ENCODE measurements at regions of chr1 and their contacts with region 1.

Region 1: GRCh38 chr1:117605774-117606648 is at the start of gene TENT5C:
- DNase-seq: peak; percentile 99
- ATAC-seq: peak; percentile 88
- H3K4me3 Mint-ChIP-seq: peak within 1 kb of the TSS; percentile 99
- H3K27ac Mint-ChIP-seq: peak within 1 kb of the TSS; percentile 99
- H3K4me1 Mint-ChIP-seq: peaks cover 50% of the 10 kb centered on the region
- H3K27me3 Mint-ChIP-seq: no peaks in the 10 kb centered on the region
- CTCF ChIP-seq: no peak
- total RNA-seq, gene TENT5C: 56.2 and 59.3 TPM in 2 replicates

Region 2: GRCh38 chr1:116372587-116373444 is 1233.2 kb before region 1 on chr1 and contains the start of gene ATP1A1:
- CTCF ChIA-PET with region 1: no interaction called
- POLR2A ChIA-PET with region 1: interaction called, 3 read pairs
- intact Hi-C with region 1: loop called (anchors 10 kb)
- DNase-seq: peak; percentile 99
- ATAC-seq: peak; percentile 75
- H3K4me3 Mint-ChIP-seq: peak within 1 kb of the TSS; percentile 91
- H3K27ac Mint-ChIP-seq: peak within 1 kb of the TSS; percentile 94
- H3K4me1 Mint-ChIP-seq: peaks cover 38% of the 10 kb centered on the region
- H3K27me3 Mint-ChIP-seq: peaks cover 2% of the 10 kb centered on the region
- CTCF ChIP-seq: no peak
- total RNA-seq, gene ATP1A1: 139 and 151 TPM in 2 replicates

Region 3: GRCh38 chr1:117367047-117368018 is 238.7 kb before region 1 on chr1 and contains the start of gene MAN1A2:
- CTCF ChIA-PET with region 1: no interaction called
- POLR2A ChIA-PET with region 1: interaction called, 4 read pairs
- intact Hi-C with region 1: loop called (anchors 1 kb)
- DNase-seq: peak; percentile 82
- ATAC-seq: peak; percentile 72
- H3K4me3 Mint-ChIP-seq: peak within 1 kb of the TSS; percentile 95
- H3K27ac Mint-ChIP-seq: peak within 1 kb of the TSS; percentile 91
- H3K4me1 Mint-ChIP-seq: peaks cover 68% of the 10 kb centered on the region
- H3K27me3 Mint-ChIP-seq: no peaks in the 10 kb centered on the region
- CTCF ChIP-seq: no peak
- total RNA-seq, gene MAN1A2: 43.3 and 46.0 TPM in 2 replicates

Region 4: GRCh38 chr1:117632269-117633067 is 26.5 kb after region 1 on chr1:
- CTCF ChIA-PET with region 1: no interaction called
- POLR2A ChIA-PET with region 1: interaction called, 248 read pairs
- intact Hi-C with region 1: no loop called
- DNase-seq: no peak
- ATAC-seq: no peak
- H3K4me3 Mint-ChIP-seq: peak overlapping the region; percentile 15
- H3K27ac Mint-ChIP-seq: no peak overlapping the region
- H3K4me1 Mint-ChIP-seq: peaks cover 95% of the 10 kb centered on the region
- H3K27me3 Mint-ChIP-seq: no peaks in the 10 kb centered on the region
- CTCF ChIP-seq: no peak

Region 5: DNA sequence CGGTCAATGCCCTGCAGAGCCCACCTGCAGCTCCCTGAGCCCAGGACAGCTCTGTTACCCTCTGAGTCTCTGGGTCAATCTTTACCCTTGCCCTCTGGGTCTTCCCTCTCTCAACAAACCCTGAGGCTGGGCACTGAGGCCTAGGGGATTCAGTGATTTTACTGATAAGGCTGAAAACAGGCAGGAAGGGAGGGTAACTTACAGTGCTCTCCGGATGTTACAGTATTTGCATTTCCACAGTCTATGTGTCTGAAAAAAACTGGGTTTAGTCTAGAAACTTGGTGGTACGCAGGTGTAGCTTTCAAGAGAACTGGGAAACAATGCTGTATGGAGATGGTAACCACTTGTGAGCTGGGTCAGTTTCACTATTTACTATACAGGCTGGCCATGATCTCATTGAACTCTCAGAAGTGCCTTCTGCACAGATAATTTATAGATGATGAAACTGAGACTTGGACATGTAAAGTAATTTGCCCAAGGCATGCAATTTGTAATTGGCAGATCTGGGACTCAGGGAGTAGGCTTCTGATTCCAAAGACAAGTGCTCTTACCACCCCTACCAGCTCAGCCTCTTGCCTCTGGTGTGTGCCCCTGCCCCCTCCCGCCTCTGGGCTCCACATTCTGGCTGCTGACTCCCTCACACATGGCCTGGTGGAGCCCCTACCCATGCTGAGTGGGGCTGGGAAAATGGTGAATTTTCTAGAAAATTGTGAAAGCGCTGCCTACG is 48.6 kb after region 1 on chr1:
- CTCF ChIA-PET with region 1: interaction called, 3 read pairs
- POLR2A ChIA-PET with region 1: interaction called, 1,269 read pairs
- intact Hi-C with region 1: loop called (anchors 1 kb)
- DNase-seq: peak; percentile 35
- ATAC-seq: peak; percentile 67
- H3K4me3 Mint-ChIP-seq: peak overlapping the region; percentile 49
- H3K27ac Mint-ChIP-seq: peak overlapping the region; percentile 93
- H3K4me1 Mint-ChIP-seq: peaks cover 92% of the 10 kb centered on the region
- H3K27me3 Mint-ChIP-seq: no peaks in the 10 kb centered on the region
- CTCF ChIP-seq: no peak

Region 6: DNA sequence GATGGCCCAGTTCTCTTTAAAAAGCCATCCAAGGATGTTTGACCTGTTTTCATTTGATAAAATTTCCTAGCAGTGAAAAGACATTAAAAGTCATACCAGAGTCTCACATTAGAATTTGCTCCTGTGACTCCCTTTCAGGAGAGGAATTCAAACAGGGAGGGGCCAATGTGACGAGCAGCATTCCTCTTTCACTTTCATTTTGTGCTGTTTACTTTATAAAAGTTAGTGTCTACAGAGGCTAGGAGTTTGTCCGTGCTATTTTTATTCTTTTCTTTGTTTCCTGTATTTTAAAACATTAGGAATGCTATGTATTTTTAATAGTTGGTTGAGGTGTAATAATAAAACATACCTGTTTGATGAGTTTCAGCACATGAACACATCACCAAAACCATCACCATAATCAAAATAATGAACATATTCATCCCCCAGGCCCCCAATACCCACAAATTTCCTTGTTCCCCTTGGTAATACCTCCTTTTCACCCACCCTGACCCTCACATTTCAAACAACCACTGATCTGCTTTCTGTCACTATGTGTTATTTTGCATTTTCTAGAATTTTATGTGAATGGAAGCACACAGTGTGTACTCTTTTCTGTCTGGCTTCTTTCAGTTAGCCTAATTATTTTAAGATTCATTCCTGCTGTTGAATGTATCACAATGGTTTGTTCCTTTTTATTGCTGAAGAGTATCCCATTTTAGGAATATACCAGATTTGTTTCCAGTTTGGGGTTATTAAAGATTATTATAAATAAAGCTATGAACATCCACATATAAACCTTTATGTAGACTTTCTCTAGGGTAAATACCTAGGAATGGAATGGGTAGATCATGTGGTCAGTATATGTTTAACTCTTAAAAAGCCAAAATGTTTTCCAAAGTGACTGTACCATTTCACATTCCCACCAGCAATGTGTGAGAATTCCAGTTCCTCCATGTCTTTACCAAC is 129.3 kb after region 1 on chr1:
- CTCF ChIA-PET with region 1: no interaction called
- POLR2A ChIA-PET with region 1: no interaction called
- intact Hi-C with region 1: loop called (anchors 5 kb)
- DNase-seq: no peak
- ATAC-seq: peak; percentile 49
- H3K4me3 Mint-ChIP-seq: peak overlapping the region; percentile 72
- H3K27ac Mint-ChIP-seq: peak overlapping the region; percentile 55
- H3K4me1 Mint-ChIP-seq: peaks cover 10% of the 10 kb centered on the region
- H3K27me3 Mint-ChIP-seq: no peaks in the 10 kb centered on the region
- CTCF ChIP-seq: no peak

Region 7: DNA sequence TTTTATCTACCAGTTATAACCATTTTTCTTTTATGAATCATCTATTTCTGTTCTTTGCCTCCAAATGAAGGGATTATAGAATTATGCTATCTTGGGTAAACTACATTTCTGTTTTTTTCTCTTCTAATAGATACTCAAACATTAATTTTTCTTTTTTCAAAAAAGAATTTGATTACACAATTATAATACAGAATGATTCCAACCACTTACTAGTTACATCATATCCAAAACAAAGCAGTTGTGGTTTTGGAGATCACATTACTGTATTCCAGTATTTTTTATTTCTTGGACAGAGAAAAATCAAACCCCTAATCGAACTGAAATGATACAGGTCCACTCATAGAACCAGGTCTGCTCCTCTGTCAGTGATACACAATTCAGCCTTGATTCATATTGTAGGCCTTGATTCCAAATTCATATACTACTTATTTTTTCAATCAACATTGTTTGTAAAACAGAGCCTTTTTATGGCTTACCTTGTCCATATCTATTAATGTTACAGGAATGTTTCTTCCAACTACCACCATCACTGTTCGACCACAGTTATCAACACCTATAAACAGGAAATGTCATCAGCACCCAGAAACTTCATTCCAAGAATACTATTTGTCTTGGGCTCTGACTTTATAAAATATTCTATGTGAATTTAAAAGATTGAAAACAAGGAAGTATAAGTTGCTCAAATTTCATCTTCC is 280.2 kb after region 1 on chr1:
- CTCF ChIA-PET with region 1: no interaction called
- POLR2A ChIA-PET with region 1: no interaction called
- intact Hi-C with region 1: no loop called
- DNase-seq: no peak
- ATAC-seq: no peak
- H3K4me3 Mint-ChIP-seq: no peak overlapping the region
- H3K27ac Mint-ChIP-seq: no peak overlapping the region
- H3K4me1 Mint-ChIP-seq: no peaks in the 10 kb centered on the region
- H3K27me3 Mint-ChIP-seq: no peaks in the 10 kb centered on the region
- CTCF ChIP-seq: no peak

Region 8: GRCh38 chr1:117929173-117929989 is 323.4 kb after region 1 on chr1 and contains the starts of genes GDAP2 and WDR3:
- CTCF ChIA-PET with region 1: no interaction called
- POLR2A ChIA-PET with region 1: interaction called, 3 read pairs
- intact Hi-C with region 1: loop called (anchors 5 kb)
- DNase-seq: peak; percentile 84
- ATAC-seq: peak; percentile 91
- H3K4me3 Mint-ChIP-seq: peak within 1 kb of the TSS; percentile 94
- H3K27ac Mint-ChIP-seq: peak within 1 kb of the TSS; percentile 91
- H3K4me1 Mint-ChIP-seq: peaks cover 57% of the 10 kb centered on the region
- H3K27me3 Mint-ChIP-seq: no peaks in the 10 kb centered on the region
- CTCF ChIP-seq: no peak
- total RNA-seq, gene GDAP2: 19.6 and 20.6 TPM in 2 replicates
- total RNA-seq, gene WDR3: 32.7 and 38.0 TPM in 2 replicates